ENCODE measurements at regions of chr17 and their contacts with region 1.

Region 1: GRCh38 chr17:67272312-67273050 is 27.5 kb upstream of the HELZ start:
- DNase-seq: no peak
- ATAC-seq: no peak
- H3K4me3 ChIP-seq: no peak overlapping the region
- H3K27ac ChIP-seq: no peak overlapping the region
- H3K4me1 ChIP-seq: no peaks in the 10 kb centered on the region
- H3K27me3 ChIP-seq: no peaks in the 10 kb centered on the region
- CTCF ChIP-seq: no peak; the same call in 1 of the 2 replicates

Region 2: DNA sequence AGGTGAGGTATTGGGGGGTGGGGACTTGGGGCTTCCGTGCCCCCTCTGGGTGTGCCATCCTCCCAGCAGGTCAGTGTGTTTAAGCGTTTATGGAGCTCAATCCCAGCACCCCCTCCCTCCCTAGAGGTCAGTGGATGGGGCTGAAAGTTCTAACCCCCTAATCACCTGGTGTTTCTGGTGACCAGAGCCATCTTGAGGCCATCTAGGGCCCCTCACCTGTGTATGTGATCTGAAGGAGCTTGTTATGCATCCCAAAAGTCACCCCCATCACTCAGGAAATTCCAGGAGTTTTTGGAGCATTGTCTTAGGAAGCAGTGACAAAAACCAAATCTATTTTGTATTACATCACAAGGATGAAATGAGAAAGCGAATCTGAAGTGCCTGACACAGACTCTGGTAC is 377.4 kb after region 1 on chr17:
- CTCF ChIA-PET with region 1: interaction called, 13 read pairs
- POLR2A ChIA-PET with region 1: no interaction called
- in situ Hi-C with region 1: no loop called
- intact Hi-C with region 1: no loop called
- DNase-seq: no peak
- ATAC-seq: no peak
- H3K4me3 ChIP-seq: no peak overlapping the region
- H3K27ac ChIP-seq: no peak overlapping the region
- H3K4me1 ChIP-seq: no peaks in the 10 kb centered on the region
- H3K27me3 ChIP-seq: no peaks in the 10 kb centered on the region
- CTCF ChIP-seq: no peak

Measured in Panc1 (cell line).